ENCODE measurements at regions of chr3 and their contacts with region 1.

Region 1: DNA sequence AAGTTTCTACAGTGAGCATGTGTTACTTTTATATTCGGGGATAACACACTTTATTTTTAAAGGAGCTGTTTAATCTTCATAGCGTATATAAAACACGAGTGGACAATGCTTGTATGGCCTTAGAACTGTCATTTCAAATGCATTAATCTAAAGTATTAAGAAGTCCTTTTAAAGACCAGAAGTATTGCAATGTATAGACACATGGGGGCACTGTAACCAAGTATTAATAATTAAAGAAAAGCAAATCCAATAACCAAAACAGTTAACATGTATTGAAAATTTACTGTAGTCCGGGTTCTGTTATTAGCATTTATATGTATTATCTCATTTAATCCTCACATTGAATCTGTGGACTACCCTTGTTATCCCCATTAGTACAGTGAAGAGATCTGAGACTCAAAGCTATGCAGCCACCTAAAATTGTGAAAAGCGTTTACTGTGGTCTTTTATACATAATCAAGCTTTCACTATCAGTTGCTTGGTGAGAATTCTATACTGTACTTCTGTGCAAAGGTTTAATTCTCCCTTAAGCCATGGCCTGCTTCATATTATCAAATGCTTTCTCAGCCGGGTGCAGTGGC is 10.1 kb downstream of the ARL14 start:
- DNase-seq: peak; percentile 31
- CTCF ChIP-seq: peak; percentile 45

Region 2: DNA sequence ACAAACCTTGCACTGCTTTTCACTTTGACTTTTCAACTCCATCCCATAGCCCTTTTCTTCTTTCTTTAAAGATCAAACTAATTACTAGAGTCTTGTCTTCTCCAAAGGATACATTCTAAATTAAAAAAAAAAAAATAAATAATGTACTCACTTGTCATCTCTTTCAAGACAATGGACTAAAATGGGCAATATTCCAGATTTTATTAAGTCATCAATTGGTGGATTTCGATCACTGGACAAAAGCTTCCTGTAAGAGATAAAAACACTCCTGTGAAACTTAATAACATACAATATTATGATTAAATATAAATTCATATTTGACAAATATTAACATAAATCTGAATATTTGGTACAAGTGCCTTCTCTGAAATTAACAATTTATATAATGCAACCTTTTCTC is 155.7 kb before region 1 on chr3:
- CTCF ChIA-PET with region 1: no interaction called
- POLR2A ChIA-PET with region 1: no interaction called
- DNase-seq: no peak
- CTCF ChIP-seq: no peak

Region 3: DNA sequence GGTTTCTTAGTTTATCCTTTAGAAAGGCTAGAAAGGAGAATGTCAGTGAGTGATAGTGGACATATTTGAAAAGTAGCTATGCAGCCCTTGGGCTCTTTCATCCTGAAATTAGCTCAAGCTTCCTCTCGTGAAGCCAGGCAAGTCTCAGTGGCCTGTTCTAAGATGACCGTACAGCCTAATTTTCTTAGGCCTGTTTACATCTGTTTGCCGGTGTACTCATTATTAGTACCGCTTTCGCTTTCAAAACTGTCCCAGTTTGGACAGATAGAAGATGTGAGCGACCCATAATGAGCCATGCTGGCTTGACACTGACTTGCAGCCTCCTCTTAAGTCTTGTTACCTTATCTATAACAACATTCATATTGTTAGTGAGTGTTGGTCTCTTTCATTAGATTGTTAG is 15.8 kb before region 1 on chr3:
- CTCF ChIA-PET with region 1: interaction called, 10 read pairs
- POLR2A ChIA-PET with region 1: no interaction called
- DNase-seq: no peak
- CTCF ChIP-seq: peak; percentile 33

Region 4: GRCh38 chr3:160676547-160677303 is 10.3 kb before region 1 on chr3 and contains the start of gene ARL14:
- CTCF ChIA-PET with region 1: interaction called, 13 read pairs
- POLR2A ChIA-PET with region 1: no interaction called
- DNase-seq: no peak
- CTCF ChIP-seq: no peak

Region 5: GRCh38 chr3:160697628-160698382 is 10.8 kb after region 1 on chr3:
- CTCF ChIA-PET with region 1: interaction called, 16 read pairs
- POLR2A ChIA-PET with region 1: no interaction called
- DNase-seq: no peak
- CTCF ChIP-seq: no peak

Region 6: GRCh38 chr3:160725338-160725737 is 38.3 kb after region 1 on chr3:
- CTCF ChIA-PET with region 1: no interaction called
- POLR2A ChIA-PET with region 1: no interaction called
- DNase-seq: no peak
- CTCF ChIP-seq: no peak

Measured in GM10248 (cell line).